ENCODE measurements at regions of chr10 and their contacts with region 1.

Region 1: DNA sequence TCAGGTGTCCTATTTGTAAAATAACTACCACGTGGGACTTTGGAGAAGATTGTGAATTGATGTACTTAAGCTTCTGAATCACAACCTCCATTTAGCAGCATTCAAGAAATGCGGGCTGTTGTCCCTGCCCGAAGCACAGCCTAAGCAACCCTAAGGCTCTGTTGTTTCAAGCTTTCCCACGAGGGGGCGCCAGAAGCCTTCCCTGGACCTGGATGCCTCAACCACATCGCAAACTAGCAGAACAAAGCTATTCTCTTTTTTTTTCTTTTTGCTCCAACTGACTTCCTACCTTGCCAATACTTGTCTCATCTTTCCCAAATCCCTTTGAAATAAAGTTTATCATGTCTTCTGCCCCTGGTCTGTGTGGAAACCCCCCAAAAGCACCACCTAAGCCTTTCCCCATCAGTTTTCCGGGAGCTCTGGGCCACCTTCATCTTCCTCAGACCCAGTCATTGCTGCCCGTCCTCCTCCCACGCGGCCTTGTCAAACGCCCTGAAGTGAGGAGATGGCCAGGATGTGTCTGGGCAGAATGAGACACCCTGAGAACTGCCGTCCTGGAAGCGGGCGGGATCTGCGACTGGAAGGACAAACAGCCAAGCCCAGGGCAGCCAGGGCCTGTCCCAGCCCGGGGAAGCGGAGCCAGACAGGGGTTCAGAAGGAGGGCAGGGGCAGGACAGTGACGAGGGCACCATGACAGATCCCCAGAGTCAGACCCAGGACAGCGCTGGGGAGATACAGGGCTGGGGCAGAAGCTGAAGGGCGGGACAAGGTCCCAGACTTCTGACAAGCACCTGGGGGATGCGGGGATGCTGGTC is 112.7 kb downstream of the SLIT1 start:
- DNase-seq: peak; percentile 79
- H3K27ac ChIP-seq: no peak overlapping the region
- CTCF ChIP-seq: peak; percentile 86

Region 2: GRCh38 chr10:96919785-96920430 is 153.2 kb before region 1 on chr10:
- CTCF ChIA-PET with region 1: no interaction called
- POLR2A ChIA-PET with region 1: no interaction called
- DNase-seq: no peak
- H3K27ac ChIP-seq: no peak overlapping the region
- CTCF ChIP-seq: no peak

Region 3: DNA sequence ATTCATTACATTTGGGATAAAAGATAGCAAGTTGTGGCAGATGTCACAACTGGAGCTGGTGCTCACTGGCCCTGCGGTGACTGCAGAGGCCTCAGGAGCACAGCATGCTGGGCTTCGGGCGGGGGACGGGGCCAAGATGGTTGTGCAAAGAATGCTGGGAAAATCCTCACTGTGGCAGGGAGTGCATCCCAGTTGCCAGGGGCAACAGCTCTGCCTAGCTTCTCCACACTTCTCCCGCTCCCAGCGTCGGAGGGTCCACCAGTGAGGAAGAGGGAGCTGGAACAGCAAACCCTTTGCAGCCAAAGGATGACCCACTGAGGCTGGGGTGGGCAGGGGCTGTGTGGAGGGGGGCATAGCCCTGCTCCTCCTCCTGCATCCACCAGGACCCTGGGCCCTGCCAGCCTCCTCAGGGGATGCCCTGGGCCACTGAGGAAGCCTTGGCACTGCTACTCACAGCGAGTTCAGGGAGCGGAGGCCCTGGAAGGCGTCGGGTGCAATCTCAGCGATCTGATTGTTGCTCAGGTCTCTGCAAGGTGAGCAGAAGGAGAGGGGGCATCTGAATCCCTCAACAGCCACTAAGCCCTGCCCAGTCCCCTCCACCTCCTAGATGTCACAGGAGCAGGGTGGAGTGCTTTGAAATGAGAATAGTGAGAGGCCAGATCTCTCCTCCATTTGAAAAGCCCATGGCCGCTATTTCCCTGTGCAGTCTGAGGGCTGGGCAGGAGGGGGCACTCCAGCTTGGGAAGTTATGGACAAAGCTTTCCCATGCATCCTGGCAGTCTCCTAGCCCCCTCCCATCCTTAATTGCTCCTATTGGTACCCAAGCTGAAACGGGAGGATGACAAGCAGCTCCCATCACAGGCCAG is 13.8 kb before region 1 on chr10:
- CTCF ChIA-PET with region 1: interaction called, 12 read pairs
- POLR2A ChIA-PET with region 1: no interaction called
- DNase-seq: no peak
- H3K27ac ChIP-seq: no peak overlapping the region
- CTCF ChIP-seq: no peak

Region 4: GRCh38 chr10:97096261-97097083 is 23.4 kb after region 1 on chr10:
- CTCF ChIA-PET with region 1: interaction called, 22 read pairs
- POLR2A ChIA-PET with region 1: no interaction called
- DNase-seq: no peak
- H3K27ac ChIP-seq: no peak overlapping the region
- CTCF ChIP-seq: no peak

Region 5: DNA sequence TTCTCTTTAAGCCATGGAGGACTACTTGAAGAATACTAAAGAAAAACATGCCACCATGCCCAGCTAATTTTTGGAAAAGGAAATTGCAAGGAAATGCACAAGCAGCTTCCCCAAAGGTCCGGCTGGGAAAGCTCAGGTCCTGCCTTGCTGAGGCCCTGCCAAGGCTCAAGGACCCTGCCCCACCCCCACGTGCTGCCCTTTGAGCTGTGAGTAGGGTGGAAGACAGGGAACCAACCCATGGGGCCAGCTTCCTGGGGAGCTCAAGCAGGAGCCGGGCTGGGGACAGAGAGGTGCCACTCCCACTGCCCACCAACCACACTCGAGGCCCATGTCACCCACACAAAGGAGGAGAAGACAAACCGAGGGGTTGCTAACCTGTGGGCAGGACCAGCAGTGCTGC is 34.5 kb after region 1 on chr10:
- CTCF ChIA-PET with region 1: interaction called, 16 read pairs
- POLR2A ChIA-PET with region 1: no interaction called
- DNase-seq: no peak
- H3K27ac ChIP-seq: no peak overlapping the region
- CTCF ChIP-seq: no peak

Region 6: GRCh38 chr10:97123765-97124164 is 50.7 kb after region 1 on chr10:
- CTCF ChIA-PET with region 1: interaction called, 126 read pairs
- POLR2A ChIA-PET with region 1: no interaction called
- DNase-seq: no peak
- H3K27ac ChIP-seq: no peak overlapping the region
- CTCF ChIP-seq: no peak

Region 7: DNA sequence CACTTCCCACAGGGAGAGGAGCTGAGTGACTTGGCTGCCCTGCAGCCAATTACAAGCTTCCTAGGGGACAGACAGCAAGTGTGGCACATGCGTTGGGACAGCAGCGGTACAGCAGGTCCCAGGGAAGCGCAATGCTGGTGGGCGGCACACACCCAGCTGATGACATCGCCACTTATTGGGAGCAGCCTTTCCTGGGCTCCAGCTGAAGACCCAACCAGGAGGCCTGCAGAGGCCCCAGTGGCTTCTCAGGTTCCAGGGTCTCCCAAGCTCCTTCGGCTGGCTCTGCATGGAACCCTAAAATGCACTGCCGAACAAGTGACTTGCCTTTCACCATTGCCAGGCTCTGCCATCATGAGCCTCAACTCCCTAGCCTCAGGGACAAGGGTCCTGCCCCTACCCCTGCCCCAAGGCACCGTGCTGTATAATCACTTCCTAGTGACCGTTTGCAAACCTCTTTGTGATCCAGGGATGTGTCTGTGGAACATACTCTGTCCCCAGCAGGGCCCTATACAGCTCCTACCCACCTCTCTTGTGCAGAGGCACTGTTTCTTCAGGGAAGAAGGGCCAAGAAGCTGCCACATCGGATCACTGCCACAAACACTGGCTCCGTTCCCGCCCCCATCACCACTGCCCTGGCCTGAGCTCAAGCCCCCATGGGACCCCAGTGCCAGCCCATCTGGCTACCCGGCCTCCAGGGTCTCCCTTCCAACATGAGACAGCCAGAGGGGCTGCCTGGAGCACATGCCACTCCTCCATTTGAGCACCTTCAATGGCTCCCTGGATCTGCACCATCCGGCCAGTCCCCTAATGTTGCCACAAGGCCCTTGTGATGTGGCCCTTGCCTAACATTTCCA is 132.0 kb after region 1 on chr10:
- CTCF ChIA-PET with region 1: interaction called, 77 read pairs
- POLR2A ChIA-PET with region 1: no interaction called
- DNase-seq: no peak
- H3K27ac ChIP-seq: no peak overlapping the region
- CTCF ChIP-seq: no peak

Region 8: DNA sequence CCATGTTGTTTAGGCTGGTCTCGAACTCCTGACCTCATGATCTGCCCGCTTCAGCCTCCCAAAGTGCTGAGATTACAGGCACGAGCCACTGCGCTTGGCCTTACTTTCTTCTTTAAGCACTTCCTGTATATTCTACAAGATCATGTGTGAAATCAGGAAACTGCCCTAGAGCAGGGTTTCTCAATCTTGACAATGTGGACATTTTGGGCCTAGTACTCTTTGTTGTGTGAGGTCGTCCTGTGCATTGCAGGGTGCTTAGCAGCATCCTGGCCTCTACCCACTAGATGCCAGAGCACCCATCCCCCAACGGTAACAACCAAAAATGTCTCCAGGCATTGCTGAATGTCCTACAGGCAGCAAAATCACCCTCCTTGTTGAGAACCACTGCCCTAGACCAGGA is 303.4 kb after region 1 on chr10:
- CTCF ChIA-PET with region 1: no interaction called
- POLR2A ChIA-PET with region 1: no interaction called
- DNase-seq: no peak
- H3K27ac ChIP-seq: no peak overlapping the region
- CTCF ChIP-seq: no peak